Posterior vena cava (tissue), 2 donors: ENCODE measurements at regions of chr17 and their contacts with region 1.

Region 1: GRCh38 chr17:80894439-80894721 is 97.3 kb upstream of the CHMP6 start:
- DNase-seq: no peak

Region 2: GRCh38 chr17:80951121-80952100 is 57.0 kb after region 1 on chr17:
- intact Hi-C with region 1: loop called in 1 of 2 experiments (anchors 2 kb)
- DNase-seq: peak; percentile 72